Cardiac septum (tissue), 1 donor: ENCODE measurements at regions of chr10 and their contacts with region 1.

Region 1: DNA sequence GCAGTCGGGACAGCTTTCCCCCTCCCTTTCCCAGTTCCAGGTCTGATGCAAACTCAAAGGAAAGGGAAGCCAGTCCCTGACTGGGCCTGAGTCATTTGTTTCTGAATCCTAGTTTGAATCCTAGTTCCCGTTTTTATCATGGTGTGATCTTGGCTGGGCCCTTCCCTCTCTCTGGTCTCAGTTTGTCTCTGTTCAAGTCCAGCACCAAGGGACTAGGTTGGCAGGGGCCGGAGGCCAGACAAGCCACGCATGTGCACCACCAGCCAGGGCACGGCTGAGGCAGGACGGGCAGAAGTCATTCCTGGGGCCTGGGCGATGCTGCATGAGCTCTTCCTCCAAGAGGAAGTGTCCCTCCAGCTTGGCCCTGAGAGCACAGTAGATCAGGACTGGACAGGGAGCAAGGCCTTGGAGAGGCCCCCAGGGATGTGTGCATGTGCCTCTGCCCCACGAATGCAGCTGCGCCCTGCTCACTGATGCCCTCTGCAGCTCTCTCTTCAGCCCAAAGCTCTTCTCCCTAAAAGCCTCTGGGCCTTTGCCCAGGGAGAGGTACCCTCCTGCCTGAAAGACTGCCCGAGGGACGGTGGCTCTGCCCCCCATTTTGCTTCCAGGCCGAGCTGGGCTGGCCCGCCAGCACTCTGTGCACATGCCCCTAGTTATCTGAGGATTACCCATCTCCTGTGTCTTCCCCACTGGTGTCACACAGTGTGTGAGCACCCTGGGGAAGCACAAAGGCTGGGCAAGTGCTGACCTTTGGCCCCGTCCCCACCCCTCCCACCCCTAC is 86.7 kb downstream of the ZMIZ1 start:
- DNase-seq: no peak

Region 2: GRCh38 chr10:78588194-78588811 is 567.2 kb before region 1 on chr10:
- intact Hi-C with region 1: no loop called
- DNase-seq: no peak

Region 3: DNA sequence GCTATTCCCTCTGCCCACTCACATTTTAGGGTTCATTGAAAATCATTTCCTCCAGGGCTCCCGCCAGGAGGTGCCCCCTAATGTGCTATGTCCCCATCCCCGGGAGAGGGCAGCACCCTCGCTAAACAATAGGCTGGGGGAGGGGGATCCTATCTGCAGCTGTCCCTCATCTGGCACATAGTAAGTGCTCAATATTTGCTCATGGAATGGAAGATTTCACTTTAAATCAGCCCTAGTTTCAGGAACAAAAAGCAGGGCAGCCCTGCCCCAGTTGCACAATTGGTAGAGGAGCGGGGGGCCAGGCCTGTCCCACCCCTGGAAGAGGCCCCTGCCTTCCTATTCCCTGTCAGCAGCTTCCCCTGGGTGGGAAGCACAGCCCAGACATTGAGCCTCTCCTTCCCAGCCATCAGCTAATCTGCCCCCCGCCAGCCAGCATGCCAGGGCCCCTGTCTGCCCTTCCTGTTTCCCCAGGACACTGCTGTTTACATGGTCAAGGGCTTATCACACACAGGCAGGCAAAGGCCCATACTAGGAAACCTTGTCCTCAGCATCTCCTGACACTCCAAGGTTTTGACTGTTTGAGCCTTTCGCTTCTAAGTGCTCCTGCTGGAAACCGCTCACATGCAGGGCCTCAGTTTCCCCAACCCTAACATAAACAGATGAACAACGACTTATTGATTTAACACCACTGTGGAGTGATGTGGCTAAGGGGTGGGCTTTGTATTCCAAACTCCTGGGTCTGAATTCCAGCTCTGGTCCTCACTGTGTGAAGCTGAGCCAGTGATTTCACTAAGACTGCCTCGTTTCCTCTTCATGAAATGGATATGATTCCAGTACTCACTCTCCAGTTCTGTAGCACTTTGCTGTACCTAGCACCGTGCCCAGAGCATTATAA is 217.4 kb before region 1 on chr10:
- intact Hi-C with region 1: no loop called
- DNase-seq: no peak

Region 4: GRCh38 chr10:79137826-79138225 is 17.7 kb before region 1 on chr10:
- intact Hi-C with region 1: loop called (anchors 2 kb)
- DNase-seq: no peak

Region 5: GRCh38 chr10:79184145-79184625 is 28.7 kb after region 1 on chr10:
- intact Hi-C with region 1: loop called (anchors 2 kb)
- DNase-seq: no peak